ENCODE measurements at regions of chr2 and their contacts with region 1.

Region 1: DNA sequence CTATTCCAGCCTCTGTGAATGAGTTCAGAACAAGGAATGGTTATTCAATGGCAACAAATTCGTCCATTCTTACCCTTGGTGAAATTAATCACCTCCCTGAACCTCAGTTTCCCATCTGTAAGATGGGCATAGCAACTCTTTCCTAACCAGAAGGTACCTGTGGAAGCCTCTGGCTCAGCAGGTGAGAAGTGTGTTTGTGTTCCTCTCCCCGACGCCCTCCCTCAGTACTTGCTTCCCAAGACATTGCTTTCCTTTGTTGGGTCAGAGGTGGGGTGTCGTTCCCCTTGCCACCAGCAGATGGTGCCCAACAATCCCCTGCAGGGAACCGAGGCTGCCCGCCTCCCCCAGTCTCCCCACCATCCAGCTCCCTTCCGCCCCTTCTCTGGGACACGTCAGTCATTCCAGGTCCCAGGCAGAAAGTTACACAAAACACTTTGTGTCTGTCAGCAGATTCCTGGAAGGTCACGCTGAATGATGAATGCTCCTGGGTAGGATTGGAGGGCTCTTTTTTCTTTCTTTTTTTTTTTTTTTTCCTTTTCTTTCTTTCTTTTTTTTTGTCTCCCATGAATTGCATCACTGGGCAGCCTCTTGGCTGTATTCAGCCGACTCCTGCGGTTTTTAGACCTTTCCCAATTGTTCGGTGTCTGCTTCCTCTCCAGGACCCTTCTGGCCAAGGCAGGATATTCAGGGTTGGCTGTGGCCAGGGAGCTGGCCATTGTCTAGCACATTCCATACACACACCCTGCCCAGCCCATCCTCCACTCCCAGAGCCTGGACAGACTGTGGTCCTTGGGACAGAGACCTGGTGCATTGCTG is 117.3 kb downstream of the LPIN1 start:
- DNase-seq: peak; percentile 38 to 71 (median 57)
- ATAC-seq: peak; percentile 88
- H3K4me3 ChIP-seq: peak overlapping the region; percentile 14
- H3K4me3 Mint-ChIP-seq: peak overlapping the region; percentile 28 to 71 (median 54)
- H3K27ac ChIP-seq: no peak overlapping the region
- H3K27ac Mint-ChIP-seq: peak overlapping the region in 2 of 9 donors; percentile 13 to 22
- H3K4me1 ChIP-seq: peaks cover 0 to 7% of the 10 kb centered on the region in 2 donors
- H3K4me1 Mint-ChIP-seq: peaks cover 8 to 14% (median 11%) of the 10 kb centered on the region in 7 donors
- H3K27me3 ChIP-seq: no peaks in the 10 kb centered on the region
- H3K27me3 Mint-ChIP-seq: peaks cover 0 to 28% (median 0%) of the 10 kb centered on the region in 5 donors

Region 2: GRCh38 chr2:10614939-10615338 is 1248.8 kb before region 1 on chr2:
- CTCF ChIA-PET with region 1: no interaction called
- POLR2A ChIA-PET with region 1: no interaction called
- intact Hi-C with region 1: no loop called
- DNase-seq: no peak
- ATAC-seq: no peak
- H3K4me3 ChIP-seq: no peak overlapping the region
- H3K4me3 Mint-ChIP-seq: no peak overlapping the region
- H3K27ac ChIP-seq: no peak overlapping the region
- H3K27ac Mint-ChIP-seq: no peak overlapping the region
- H3K4me1 ChIP-seq: peaks cover 0 to 5% of the 10 kb centered on the region in 2 donors
- H3K4me1 Mint-ChIP-seq: peaks cover 4 to 13% (median 8%) of the 10 kb centered on the region in 7 donors
- H3K27me3 ChIP-seq: no peaks in the 10 kb centered on the region
- H3K27me3 Mint-ChIP-seq: no peaks in the 10 kb centered on the region

Region 3: GRCh38 chr2:11829947-11830707 is 33.6 kb before region 1 on chr2:
- CTCF ChIA-PET with region 1: interaction called, 3 read pairs
- POLR2A ChIA-PET with region 1: no interaction called
- intact Hi-C with region 1: loop called (anchors 1 kb)
- DNase-seq: peak in 8 of 9 donors; percentile 53 to 73 (median 63)
- ATAC-seq: peak; percentile 86
- H3K4me3 ChIP-seq: peak overlapping the region; percentile 60
- H3K4me3 Mint-ChIP-seq: peak overlapping the region; percentile 80 to 97 (median 84)
- H3K27ac ChIP-seq: peak overlapping the region; percentile 46
- H3K27ac Mint-ChIP-seq: peak overlapping the region; percentile 21 to 87 (median 78)
- H3K4me1 ChIP-seq: peaks cover 20% of the 10 kb centered on the region in 2 donors
- H3K4me1 Mint-ChIP-seq: peaks cover 18 to 44% (median 33%) of the 10 kb centered on the region in 7 donors
- H3K27me3 ChIP-seq: no peaks in the 10 kb centered on the region
- H3K27me3 Mint-ChIP-seq: peaks cover 0 to 50% (median 0%) of the 10 kb centered on the region in 5 donors

Region 4: DNA sequence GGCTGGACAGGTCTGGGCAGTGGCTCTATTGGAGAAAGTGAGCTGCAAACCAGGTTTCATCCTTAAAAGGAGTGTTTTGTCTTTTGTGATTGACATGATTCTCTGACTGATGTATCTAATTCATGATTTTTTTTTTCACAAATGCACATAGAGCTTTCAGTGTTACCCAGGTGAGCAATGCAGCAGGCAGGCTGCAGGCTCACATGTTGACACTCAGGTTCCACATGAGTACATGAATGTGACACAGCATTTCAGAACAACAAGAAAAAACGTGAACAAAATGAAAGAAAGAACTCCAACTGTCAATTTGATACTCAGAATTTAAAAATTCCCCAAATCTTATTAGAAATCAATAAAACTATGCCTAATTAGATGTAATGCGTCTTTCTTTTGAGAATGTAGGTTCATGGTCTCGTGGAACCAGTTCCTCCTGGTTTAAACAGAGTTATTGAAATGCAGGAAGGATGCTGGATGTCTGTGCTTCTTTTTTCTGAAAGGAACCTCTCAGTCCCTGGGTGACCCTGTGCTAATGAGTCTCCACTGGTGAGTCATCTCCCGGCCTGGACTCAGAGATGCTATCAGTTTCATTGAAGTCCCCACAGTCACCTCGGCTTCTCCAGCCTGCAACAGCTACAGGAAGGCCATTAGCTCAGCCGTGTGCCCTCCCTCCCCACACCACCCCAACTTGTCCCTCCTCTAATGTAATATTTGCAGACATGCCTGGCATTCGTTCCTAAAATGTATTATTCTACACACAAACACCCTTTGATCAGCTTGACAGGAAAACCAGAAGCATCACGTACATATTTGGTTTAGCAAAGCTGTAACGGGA is 313.1 kb after region 1 on chr2:
- CTCF ChIA-PET with region 1: no interaction called
- POLR2A ChIA-PET with region 1: no interaction called
- intact Hi-C with region 1: loop called in 1 of 2 experiments (anchors 5 kb)
- DNase-seq: peak in 1 of 9 donors; percentile 13
- ATAC-seq: peak; percentile 83
- H3K4me3 ChIP-seq: peak overlapping the region; percentile 21
- H3K4me3 Mint-ChIP-seq: peak overlapping the region in 9 of 10 donors; percentile 25 to 76 (median 62)
- H3K27ac ChIP-seq: no peak overlapping the region
- H3K27ac Mint-ChIP-seq: peak overlapping the region in 8 of 9 donors; percentile 8 to 95 (median 58)
- H3K4me1 ChIP-seq: peaks cover 10 to 25% of the 10 kb centered on the region in 2 donors
- H3K4me1 Mint-ChIP-seq: peaks cover 33 to 67% (median 52%) of the 10 kb centered on the region in 7 donors
- H3K27me3 ChIP-seq: no peaks in the 10 kb centered on the region
- H3K27me3 Mint-ChIP-seq: peaks cover 0 to 7% (median 0%) of the 10 kb centered on the region in 5 donors

Region 5: DNA sequence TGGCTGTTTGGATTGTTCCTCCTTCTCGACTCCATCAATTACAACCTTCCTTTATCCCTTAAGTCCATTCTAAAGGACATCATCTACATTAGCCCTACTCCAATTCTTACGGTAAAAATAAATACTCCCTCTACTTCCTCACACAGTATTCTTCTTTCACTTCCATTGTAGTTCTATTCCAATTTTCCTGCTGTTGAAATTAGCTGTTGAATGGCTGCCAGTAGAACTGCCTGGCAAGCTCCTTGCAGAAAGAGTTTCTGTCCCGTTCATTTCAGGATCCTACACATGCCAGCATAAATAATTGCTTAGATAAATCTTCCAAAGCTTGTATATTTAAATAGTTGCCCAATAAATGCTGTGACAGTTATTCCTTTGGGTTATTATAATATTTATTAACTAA is 393.8 kb after region 1 on chr2:
- CTCF ChIA-PET with region 1: no interaction called
- POLR2A ChIA-PET with region 1: no interaction called
- intact Hi-C with region 1: loop called in 1 of 2 experiments (anchors 10 kb)
- DNase-seq: no peak
- ATAC-seq: no peak
- H3K4me3 ChIP-seq: no peak overlapping the region
- H3K4me3 Mint-ChIP-seq: no peak overlapping the region
- H3K27ac ChIP-seq: no peak overlapping the region
- H3K27ac Mint-ChIP-seq: no peak overlapping the region
- H3K4me1 ChIP-seq: peaks cover 0 to 4% of the 10 kb centered on the region in 2 donors
- H3K4me1 Mint-ChIP-seq: peaks cover 0 to 17% (median 12%) of the 10 kb centered on the region in 7 donors
- H3K27me3 ChIP-seq: no peaks in the 10 kb centered on the region
- H3K27me3 Mint-ChIP-seq: peaks cover 0 to 16% (median 0%) of the 10 kb centered on the region in 5 donors

Region 6: DNA sequence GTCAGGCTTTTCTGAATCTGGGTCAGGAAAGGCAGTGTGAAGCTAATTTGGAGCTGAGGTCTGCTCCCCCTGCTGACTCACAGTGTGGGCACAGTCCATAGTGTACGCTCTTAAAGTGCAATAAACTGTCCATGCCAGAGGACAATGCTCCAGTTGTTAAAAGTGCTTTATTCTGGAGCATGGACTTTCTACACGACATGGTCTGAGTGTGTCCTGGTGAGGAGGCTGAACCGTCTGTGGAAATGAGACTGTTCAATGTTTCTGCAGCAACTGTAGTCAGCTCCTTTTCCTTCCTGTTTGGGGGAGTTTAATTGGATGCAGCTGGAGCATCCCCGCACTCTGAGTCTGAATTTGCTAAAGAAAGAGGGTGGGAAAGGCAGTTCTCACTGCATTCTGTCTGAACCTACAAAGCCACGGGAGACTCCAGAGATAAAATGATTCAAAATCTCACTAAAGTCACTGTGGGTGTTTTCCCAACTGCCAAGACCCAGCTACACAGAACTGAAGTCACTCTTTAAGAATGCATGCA is 742.8 kb after region 1 on chr2:
- CTCF ChIA-PET with region 1: no interaction called
- POLR2A ChIA-PET with region 1: no interaction called
- intact Hi-C with region 1: loop called in 1 of 2 experiments (anchors 2 kb)
- DNase-seq: peak in 3 of 9 donors; percentile 3 to 26 (median 12)
- ATAC-seq: no peak
- H3K4me3 ChIP-seq: no peak overlapping the region
- H3K4me3 Mint-ChIP-seq: no peak overlapping the region
- H3K27ac ChIP-seq: no peak overlapping the region
- H3K27ac Mint-ChIP-seq: no peak overlapping the region
- H3K4me1 ChIP-seq: peaks cover 0 to 10% of the 10 kb centered on the region in 2 donors
- H3K4me1 Mint-ChIP-seq: peaks cover 7 to 37% (median 25%) of the 10 kb centered on the region in 7 donors
- H3K27me3 ChIP-seq: no peaks in the 10 kb centered on the region
- H3K27me3 Mint-ChIP-seq: peaks cover 0 to 16% (median 0%) of the 10 kb centered on the region in 5 donors

Measured in naive thymus-derived CD4-positive, alpha-beta T cell (primary cell).